ENCODE measurements at regions of chr17 and their contacts with region 1.

Region 1: DNA sequence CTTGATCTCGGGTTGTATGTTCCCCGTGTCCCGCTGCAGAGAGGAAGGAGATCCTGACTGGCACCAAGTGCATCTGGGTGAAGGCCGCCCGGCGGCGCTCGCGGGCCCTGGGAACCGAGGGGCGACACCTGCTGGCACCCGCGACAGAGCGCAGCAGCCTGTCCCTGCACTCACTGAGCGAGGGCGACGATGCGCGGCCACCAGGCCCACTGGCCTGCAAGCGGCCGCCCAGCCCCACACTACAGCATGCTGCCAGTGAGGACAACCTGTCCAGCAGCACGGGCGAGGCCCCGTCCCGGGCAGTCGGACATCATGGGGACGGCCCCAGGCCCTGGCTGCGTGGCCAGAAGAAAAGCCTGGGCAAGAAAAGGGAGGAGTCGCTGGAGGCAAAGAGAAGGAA is 7.5 kb downstream of the BTBD17 start:
- DNase-seq: peak; percentile 88
- ATAC-seq: peak; percentile 67
- H3K4me3 Mint-ChIP-seq: no peak overlapping the region
- H3K27ac Mint-ChIP-seq: no peak overlapping the region
- H3K4me1 Mint-ChIP-seq: peaks cover 10% of the 10 kb centered on the region
- H3K27me3 Mint-ChIP-seq: peaks cover 85% of the 10 kb centered on the region
- CTCF ChIP-seq: peak; percentile 65

Region 2: DNA sequence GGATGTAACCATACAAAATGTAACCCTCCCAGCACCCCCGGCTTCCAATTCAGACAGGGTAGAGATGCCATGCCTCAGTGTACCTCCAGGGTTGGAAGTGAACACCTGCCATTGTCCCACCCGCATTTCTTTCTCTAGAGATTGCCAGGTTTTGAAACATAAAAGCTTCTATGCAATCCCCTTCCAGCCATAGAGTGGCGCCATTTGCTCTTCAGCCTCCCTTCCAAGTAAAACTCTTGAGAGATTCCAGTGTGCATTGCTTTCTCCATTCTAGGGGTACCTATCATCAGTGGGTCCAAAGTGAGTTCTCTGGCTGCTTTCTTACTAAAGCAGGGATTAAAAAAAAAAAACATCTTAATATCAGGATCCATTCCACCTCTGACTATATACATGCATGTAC is 283.7 kb before region 1 on chr17:
- CTCF ChIA-PET with region 1: no interaction called
- POLR2A ChIA-PET with region 1: no interaction called
- DNase-seq: no peak
- ATAC-seq: no peak
- H3K4me3 Mint-ChIP-seq: no peak overlapping the region
- H3K27ac Mint-ChIP-seq: no peak overlapping the region
- H3K4me1 Mint-ChIP-seq: no peaks in the 10 kb centered on the region
- H3K27me3 Mint-ChIP-seq: peaks cover 3% of the 10 kb centered on the region; the same call in 1 of the 2 replicates
- CTCF ChIP-seq: no peak

Region 3: GRCh38 chr17:74280093-74280513 is 74.0 kb before region 1 on chr17:
- CTCF ChIA-PET with region 1: interaction called, 22 read pairs
- POLR2A ChIA-PET with region 1: no interaction called
- DNase-seq: no peak
- ATAC-seq: no peak
- H3K4me3 Mint-ChIP-seq: no peak overlapping the region
- H3K27ac Mint-ChIP-seq: peak overlapping the region; percentile 27; the same call in 1 of the 2 replicates
- H3K4me1 Mint-ChIP-seq: peaks cover 4% of the 10 kb centered on the region; the same call in 1 of the 2 replicates
- H3K27me3 Mint-ChIP-seq: peaks cover 9% of the 10 kb centered on the region
- CTCF ChIP-seq: no peak

Region 4: GRCh38 chr17:74296548-74296936 is 57.6 kb before region 1 on chr17:
- CTCF ChIA-PET with region 1: interaction called, 19 read pairs
- POLR2A ChIA-PET with region 1: no interaction called
- DNase-seq: peak; percentile 56
- ATAC-seq: peak; percentile 74
- H3K4me3 Mint-ChIP-seq: no peak overlapping the region
- H3K27ac Mint-ChIP-seq: no peak overlapping the region
- H3K4me1 Mint-ChIP-seq: no peaks in the 10 kb centered on the region
- H3K27me3 Mint-ChIP-seq: peaks cover 2% of the 10 kb centered on the region; the same call in 1 of the 2 replicates
- CTCF ChIP-seq: no peak; the same call in 1 of the 2 replicates

Region 5: DNA sequence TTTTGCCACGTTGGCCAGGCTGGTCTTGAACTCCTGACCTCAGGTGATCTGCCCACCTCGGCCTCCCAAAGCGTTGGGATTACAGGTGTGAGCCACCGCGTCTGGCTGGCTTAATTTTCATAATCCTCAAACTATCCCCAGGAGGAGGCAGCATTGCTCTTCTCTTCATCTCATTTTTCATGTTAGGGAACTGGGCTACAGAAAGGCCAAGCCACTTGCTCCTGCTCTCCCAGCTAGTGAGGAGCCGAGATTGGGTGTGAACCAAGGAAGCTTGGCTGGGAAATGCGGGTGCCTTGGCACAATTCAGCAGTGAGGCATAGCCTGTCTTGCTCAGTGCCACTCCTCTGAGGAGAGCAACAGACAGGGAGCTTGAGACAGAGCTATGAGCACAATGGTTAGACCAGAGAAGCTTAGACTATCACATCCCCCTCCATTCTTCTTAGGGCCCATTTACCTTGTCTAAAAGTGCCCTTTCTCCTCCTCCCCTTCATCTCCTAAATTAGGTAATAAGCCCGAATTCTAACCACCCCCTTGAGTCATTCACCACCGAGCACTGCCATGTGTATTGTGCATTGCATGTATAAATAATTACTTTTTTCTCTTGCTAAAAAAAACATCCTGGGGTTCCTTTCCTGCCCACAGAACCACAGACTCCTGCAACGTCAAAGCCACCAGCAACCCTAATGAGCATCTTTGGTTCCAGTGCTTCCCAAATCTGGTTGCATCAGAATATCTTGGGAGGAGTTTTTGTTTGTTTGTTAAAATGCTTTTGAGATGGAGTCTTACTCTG is 48.1 kb before region 1 on chr17:
- CTCF ChIA-PET with region 1: interaction called, 29 read pairs
- POLR2A ChIA-PET with region 1: no interaction called
- DNase-seq: no peak
- ATAC-seq: no peak
- H3K4me3 Mint-ChIP-seq: no peak overlapping the region
- H3K27ac Mint-ChIP-seq: no peak overlapping the region
- H3K4me1 Mint-ChIP-seq: no peaks in the 10 kb centered on the region
- H3K27me3 Mint-ChIP-seq: no peaks in the 10 kb centered on the region
- CTCF ChIP-seq: no peak

Region 6: DNA sequence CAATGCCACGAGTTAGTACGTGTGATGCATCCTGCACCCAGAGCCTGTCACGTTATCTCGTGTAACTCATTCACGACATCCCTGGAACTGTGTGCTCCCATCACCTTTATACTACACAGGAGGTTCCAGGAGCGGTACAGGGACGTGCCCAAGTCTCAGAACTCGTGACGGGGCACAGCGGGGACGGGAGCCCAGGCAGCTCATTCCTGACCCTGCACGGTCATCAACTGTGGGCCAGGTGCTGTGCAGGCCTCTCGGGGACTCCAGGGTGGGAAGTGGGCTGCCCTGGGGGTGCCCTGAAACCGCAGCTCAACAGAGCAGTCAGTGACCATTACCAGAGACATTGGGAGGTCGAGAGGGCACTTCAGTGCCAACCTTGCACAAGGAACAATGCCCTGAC is 39.2 kb before region 1 on chr17:
- CTCF ChIA-PET with region 1: interaction called, 13 read pairs
- POLR2A ChIA-PET with region 1: no interaction called
- DNase-seq: no peak
- ATAC-seq: no peak
- H3K4me3 Mint-ChIP-seq: no peak overlapping the region
- H3K27ac Mint-ChIP-seq: no peak overlapping the region
- H3K4me1 Mint-ChIP-seq: no peaks in the 10 kb centered on the region
- H3K27me3 Mint-ChIP-seq: no peaks in the 10 kb centered on the region; the same call in 1 of the 2 replicates
- CTCF ChIP-seq: no peak

Region 7: GRCh38 chr17:74332763-74333283 is 21.3 kb before region 1 on chr17:
- CTCF ChIA-PET with region 1: interaction called, 28 read pairs
- POLR2A ChIA-PET with region 1: no interaction called
- DNase-seq: no peak
- ATAC-seq: 0 out of 2 replicates have a peak, but pooled peaks have one; percentile 18
- H3K4me3 Mint-ChIP-seq: no peak overlapping the region
- H3K27ac Mint-ChIP-seq: no peak overlapping the region
- H3K4me1 Mint-ChIP-seq: peaks cover 21% of the 10 kb centered on the region
- H3K27me3 Mint-ChIP-seq: peaks cover 1% of the 10 kb centered on the region
- CTCF ChIP-seq: no peak

Region 8: DNA sequence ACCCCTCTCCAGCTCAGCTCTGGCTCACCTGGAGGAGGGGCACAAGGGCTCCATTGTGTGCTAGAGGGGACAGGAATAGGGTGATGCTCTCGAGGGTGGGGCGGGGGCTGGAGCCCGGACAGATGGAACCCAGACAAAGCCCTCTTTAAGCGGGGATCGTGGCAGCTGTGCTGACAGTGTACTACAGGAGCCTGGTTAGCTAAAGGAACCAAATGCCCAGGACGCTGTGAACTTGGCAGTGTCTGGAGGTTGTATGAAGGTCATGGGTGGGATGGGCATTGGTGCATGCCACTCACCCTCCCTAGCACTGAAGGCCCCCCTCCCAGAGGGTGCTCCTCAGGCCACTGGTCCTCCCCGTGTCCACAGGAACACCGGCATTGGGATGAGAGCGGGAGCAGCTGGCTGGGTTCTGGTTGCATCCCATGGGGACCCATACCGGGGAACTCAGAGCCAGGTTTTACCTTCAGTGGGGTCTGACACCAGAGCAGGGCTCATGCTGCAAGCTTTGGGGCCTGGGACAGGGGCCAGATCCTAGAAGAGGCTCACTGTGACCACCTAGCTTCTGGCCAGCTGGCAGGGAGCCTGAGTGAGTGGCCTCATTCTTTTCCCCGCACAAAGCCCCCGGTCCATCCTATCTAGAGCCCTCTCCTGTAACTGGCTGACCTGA is 16.2 kb before region 1 on chr17:
- CTCF ChIA-PET with region 1: interaction called, 28 read pairs
- POLR2A ChIA-PET with region 1: no interaction called
- DNase-seq: no peak
- ATAC-seq: no peak
- H3K4me3 Mint-ChIP-seq: no peak overlapping the region
- H3K27ac Mint-ChIP-seq: no peak overlapping the region
- H3K4me1 Mint-ChIP-seq: peaks cover 11% of the 10 kb centered on the region
- H3K27me3 Mint-ChIP-seq: no peaks in the 10 kb centered on the region
- CTCF ChIP-seq: no peak

Region 9: GRCh38 chr17:74417178-74418045 is 63.3 kb after region 1 on chr17:
- CTCF ChIA-PET with region 1: no interaction called
- POLR2A ChIA-PET with region 1: no interaction called
- DNase-seq: no peak
- ATAC-seq: peak; percentile 18
- H3K4me3 Mint-ChIP-seq: no peak overlapping the region
- H3K27ac Mint-ChIP-seq: no peak overlapping the region
- H3K4me1 Mint-ChIP-seq: peaks cover 6% of the 10 kb centered on the region; the same call in 1 of the 2 replicates
- H3K27me3 Mint-ChIP-seq: no peaks in the 10 kb centered on the region; the same call in 1 of the 2 replicates
- CTCF ChIP-seq: no peak

Region 10: GRCh38 chr17:74444406-74444805 is 90.3 kb after region 1 on chr17:
- CTCF ChIA-PET with region 1: no interaction called
- POLR2A ChIA-PET with region 1: no interaction called
- DNase-seq: no peak
- ATAC-seq: peak; percentile 6; the same call in 1 of the 2 replicates
- H3K4me3 Mint-ChIP-seq: no peak overlapping the region
- H3K27ac Mint-ChIP-seq: no peak overlapping the region
- H3K4me1 Mint-ChIP-seq: peaks cover 25% of the 10 kb centered on the region
- H3K27me3 Mint-ChIP-seq: no peaks in the 10 kb centered on the region
- CTCF ChIP-seq: no peak

Measured in WTC11 (cell line).